GM18951 (cell line): ENCODE measurements at regions of chr13 and their contacts with region 1.

Region 1: DNA sequence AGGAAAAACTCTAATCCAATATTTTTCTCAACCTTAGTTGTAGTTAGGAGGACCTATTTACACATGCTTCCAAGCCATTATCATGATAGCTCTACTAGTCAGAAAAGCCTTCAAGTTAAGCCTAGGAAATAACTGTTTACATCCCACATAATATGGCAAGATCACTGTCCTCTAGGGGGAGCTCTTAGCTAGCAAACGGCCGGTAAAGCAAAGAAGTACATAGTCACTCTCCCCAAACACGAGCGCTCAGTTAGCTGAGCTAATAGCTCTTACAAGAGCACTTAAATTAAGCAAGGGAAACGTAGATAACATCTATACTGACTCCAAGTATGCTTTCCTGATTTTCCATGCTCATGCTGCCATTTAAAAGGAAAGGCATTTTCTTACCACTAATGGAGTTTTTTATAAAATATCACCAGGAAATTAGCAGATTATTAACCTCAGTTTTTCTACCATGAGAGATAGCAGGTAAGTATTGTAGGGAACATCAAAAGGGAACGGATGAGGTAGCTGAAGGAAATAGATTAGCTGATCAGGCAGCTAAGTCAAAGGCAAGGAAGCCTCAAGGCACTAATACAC is 100.6 kb upstream of the PABPC3 start:
- POLR2A ChIP-seq: no peak

Region 2: GRCh38 chr13:24727731-24728601 is 267.3 kb before region 1 on chr13:
- in situ Hi-C with region 1: loop called (anchors 25 kb)
- POLR2A ChIP-seq: no peak